ENCODE measurements at regions of chr4 and their contacts with region 1.

Region 1: GRCh38 chr4:186067757-186068385 is 1.1 kb upstream of the TLR3 start:
- DNase-seq: peak; percentile 67
- ATAC-seq: peak; percentile 98
- H3K4me3 ChIP-seq: peak overlapping the region in 2 of 3 experiments; percentile 41 to 55; a peak in 2 of 6 replicates
- H3K27ac ChIP-seq: no peak overlapping the region
- H3K4me1 ChIP-seq: peaks cover 22% of the 10 kb centered on the region
- H3K27me3 ChIP-seq: peaks cover 0 to 3% of the 10 kb centered on the region in 2 experiments; a peak in 2 of 5 replicates
- CTCF ChIP-seq: peak; percentile 81
- EP300 ChIP-seq: no peak
- POLR2A ChIP-seq: no peak
- RAD21 ChIP-seq: peak; percentile 28; the same call in 1 of the 2 replicates

Region 2: GRCh38 chr4:186137196-186137794 is 69.4 kb after region 1 on chr4:
- CTCF ChIA-PET with region 1: interaction called, 4 read pairs
- POLR2A ChIA-PET with region 1: no interaction called
- in situ Hi-C with region 1: no loop called
- intact Hi-C with region 1: loop called (anchors 1 kb)
- DNase-seq: no peak
- ATAC-seq: no peak
- H3K4me3 ChIP-seq: no peak overlapping the region
- H3K27ac ChIP-seq: no peak overlapping the region
- H3K4me1 ChIP-seq: no peaks in the 10 kb centered on the region
- H3K27me3 ChIP-seq: peaks cover 0 to 8% of the 10 kb centered on the region in 2 experiments; a peak in 1 of 5 replicates
- CTCF ChIP-seq: peak; percentile 50
- EP300 ChIP-seq: no peak
- POLR2A ChIP-seq: no peak
- RAD21 ChIP-seq: no peak

Region 3: GRCh38 chr4:186201535-186202230 is 133.8 kb after region 1 on chr4:
- CTCF ChIA-PET with region 1: no interaction called
- POLR2A ChIA-PET with region 1: no interaction called
- in situ Hi-C with region 1: no loop called
- intact Hi-C with region 1: loop called (anchors 5 kb)
- DNase-seq: peak; percentile 59
- ATAC-seq: peak; percentile 100
- H3K4me3 ChIP-seq: no peak overlapping the region
- H3K27ac ChIP-seq: no peak overlapping the region
- H3K4me1 ChIP-seq: 0 out of 2 replicates have a peak, but pooled peaks cover 5% of the 10 kb centered on the region
- H3K27me3 ChIP-seq: no peaks in the 10 kb centered on the region
- CTCF ChIP-seq: peak; percentile 82
- EP300 ChIP-seq: no peak
- POLR2A ChIP-seq: no peak
- RAD21 ChIP-seq: peak; percentile 81

Measured in HepG2 (cell line).